ENCODE measurements at regions of chr11 and their contacts with region 1.

Region 1: GRCh38 chr11:116680349-116681125 is 92.2 kb downstream of the BUD13 start:
- DNase-seq: no peak

Region 2: GRCh38 chr11:116403794-116404469 is 276.6 kb before region 1 on chr11:
- intact Hi-C with region 1: no loop called
- DNase-seq: no peak

Region 3: DNA sequence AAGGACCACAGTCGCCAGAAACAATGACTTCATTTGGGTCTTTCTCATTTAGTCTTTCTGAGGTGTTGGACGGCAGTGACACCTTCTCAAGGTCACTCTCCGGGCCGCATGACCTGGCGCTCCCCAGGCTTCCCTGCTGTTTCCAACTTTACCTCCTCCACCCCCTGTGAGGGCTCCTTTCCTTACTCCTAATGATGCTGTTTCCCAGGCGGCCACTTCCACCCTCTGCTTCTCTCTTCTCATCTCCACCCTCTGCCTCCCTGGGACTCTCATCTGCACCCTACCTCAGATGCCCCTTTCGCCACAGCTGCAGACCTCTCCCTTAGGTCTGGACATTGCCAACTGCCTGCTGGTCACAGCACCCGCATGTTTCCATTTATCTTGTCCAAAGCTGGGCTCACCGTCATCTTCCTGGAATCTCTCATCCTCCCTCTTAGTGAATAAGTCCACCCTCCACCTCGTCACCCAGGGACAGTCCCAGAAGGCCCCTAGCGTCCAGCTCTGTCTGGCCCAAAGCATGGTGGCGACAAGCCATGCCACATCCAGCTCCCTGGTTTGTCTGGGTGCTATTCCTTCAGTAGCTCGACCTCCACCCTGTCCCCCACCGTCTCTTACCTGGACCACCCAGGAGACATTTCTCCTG is 21.5 kb before region 1 on chr11:
- intact Hi-C with region 1: loop called in 1 of 2 experiments (anchors 1 kb)
- DNase-seq: peak; percentile 62